GM12878 (cell line): ENCODE measurements at regions of chr10 and their contacts with region 1.

Region 1: GRCh38 chr10:63256009-63256773 is 123.1 kb downstream of the NRBF2 start:
- DNase-seq: no peak
- ATAC-seq: peak; percentile 31
- H3K4me3 ChIP-seq: peak overlapping the region; percentile 14; the same call in 1 of the 2 replicates
- H3K27ac ChIP-seq: 0 out of 2 replicates have a peak overlapping the region, but pooled peaks have one; percentile 42
- H3K4me1 ChIP-seq: peaks cover 36% of the 10 kb centered on the region
- H3K27me3 ChIP-seq: no peaks in the 10 kb centered on the region
- CTCF ChIP-seq: no peak
- EP300 ChIP-seq: no peak
- POLR2A ChIP-seq: no peak
- RAD21 ChIP-seq: no peak

Region 2: GRCh38 chr10:63227207-63227915 is 28.8 kb before region 1 on chr10:
- CTCF ChIA-PET with region 1: interaction called, 6 read pairs
- POLR2A ChIA-PET with region 1: interaction called, 6 read pairs
- RAD21 ChIA-PET with region 1: interaction called, 17 read pairs
- SMC1A ChIA-PET with region 1: interaction called, 7 read pairs
- in situ Hi-C with region 1: no loop called
- intact Hi-C with region 1: loop called (anchors 5 kb)
- DNase-seq: no peak
- ATAC-seq: peak; percentile 79
- H3K4me3 ChIP-seq: no peak overlapping the region
- H3K27ac ChIP-seq: peak overlapping the region; percentile 66
- H3K4me1 ChIP-seq: peaks cover 27% of the 10 kb centered on the region
- H3K27me3 ChIP-seq: no peaks in the 10 kb centered on the region
- CTCF ChIP-seq: no peak
- EP300 ChIP-seq: no peak
- POLR2A ChIP-seq: no peak
- RAD21 ChIP-seq: no peak

Region 3: GRCh38 chr10:63236113-63236935 is 19.9 kb before region 1 on chr10:
- CTCF ChIA-PET with region 1: interaction called, 5 read pairs
- POLR2A ChIA-PET with region 1: interaction called, 12 read pairs
- RAD21 ChIA-PET with region 1: interaction called, 23 read pairs
- SMC1A ChIA-PET with region 1: interaction called, 47 read pairs
- in situ Hi-C with region 1: no loop called
- intact Hi-C with region 1: no loop called
- DNase-seq: no peak
- ATAC-seq: peak; percentile 87
- H3K4me3 ChIP-seq: no peak overlapping the region
- H3K27ac ChIP-seq: peak overlapping the region; percentile 56
- H3K4me1 ChIP-seq: peaks cover 5% of the 10 kb centered on the region; the same call in 1 of the 2 replicates
- H3K27me3 ChIP-seq: no peaks in the 10 kb centered on the region
- CTCF ChIP-seq: no peak
- EP300 ChIP-seq: peak; percentile 54 to 70; a peak in 3 of 4 replicates
- POLR2A ChIP-seq: no peak
- RAD21 ChIP-seq: no peak

Region 4: GRCh38 chr10:63241841-63242281 is 14.3 kb before region 1 on chr10:
- CTCF ChIA-PET with region 1: interaction called, 5 read pairs
- POLR2A ChIA-PET with region 1: interaction called, 12 read pairs
- RAD21 ChIA-PET with region 1: interaction called, 23 read pairs
- SMC1A ChIA-PET with region 1: interaction called, 47 read pairs
- in situ Hi-C with region 1: no loop called
- intact Hi-C with region 1: no loop called
- DNase-seq: no peak
- ATAC-seq: peak; percentile 37
- H3K4me3 ChIP-seq: peak overlapping the region; percentile 21; the same call in 1 of the 2 replicates
- H3K27ac ChIP-seq: no peak overlapping the region
- H3K4me1 ChIP-seq: peaks cover 25% of the 10 kb centered on the region
- H3K27me3 ChIP-seq: no peaks in the 10 kb centered on the region
- CTCF ChIP-seq: no peak
- EP300 ChIP-seq: no peak
- POLR2A ChIP-seq: no peak
- RAD21 ChIP-seq: no peak

Region 5: GRCh38 chr10:63318491-63318890 is 62.3 kb after region 1 on chr10:
- CTCF ChIA-PET with region 1: no interaction called
- POLR2A ChIA-PET with region 1: no interaction called
- RAD21 ChIA-PET with region 1: no interaction called
- SMC1A ChIA-PET with region 1: no interaction called
- in situ Hi-C with region 1: no loop called
- intact Hi-C with region 1: no loop called
- DNase-seq: no peak
- ATAC-seq: no peak
- H3K4me3 ChIP-seq: no peak overlapping the region
- H3K27ac ChIP-seq: no peak overlapping the region
- H3K4me1 ChIP-seq: no peaks in the 10 kb centered on the region
- H3K27me3 ChIP-seq: no peaks in the 10 kb centered on the region
- CTCF ChIP-seq: no peak
- EP300 ChIP-seq: no peak
- POLR2A ChIP-seq: no peak
- RAD21 ChIP-seq: no peak